ENCODE measurements at regions of chr17 and their contacts with region 1.

Region 1: DNA sequence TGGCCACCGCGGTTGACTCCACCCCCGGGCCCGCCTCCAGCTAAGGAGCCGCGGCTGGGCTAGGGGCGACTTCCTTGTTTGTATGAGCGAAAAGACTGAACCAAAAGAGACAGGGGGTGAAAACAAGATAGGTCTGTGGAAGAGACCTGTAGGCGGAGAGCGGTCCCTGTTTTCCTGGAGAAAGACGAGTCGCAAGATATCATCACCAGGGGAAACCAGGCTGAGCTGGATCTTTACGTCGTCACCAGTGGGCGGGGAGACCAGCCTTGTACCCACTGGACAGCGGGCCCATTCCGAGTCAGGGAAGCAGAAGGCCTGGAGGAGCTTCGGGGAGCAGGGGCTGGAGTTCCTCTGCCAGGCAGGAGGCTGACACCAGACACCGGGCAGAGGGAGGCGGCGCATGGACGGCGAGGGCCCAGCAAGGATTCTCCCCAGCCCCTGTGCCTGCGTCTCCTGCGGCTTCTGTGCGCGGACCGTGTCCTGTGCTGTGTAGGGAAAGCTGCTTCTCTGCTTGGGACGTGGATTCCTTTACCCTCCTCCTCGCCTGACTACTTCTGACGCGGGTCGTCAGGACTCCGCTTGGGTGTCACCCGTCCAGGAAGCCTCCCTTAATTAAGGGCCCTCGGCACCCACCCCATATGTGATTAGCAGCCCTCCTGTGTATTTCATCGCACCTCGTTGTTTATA is 10.3 kb upstream of the ARL4D start:
- DNase-seq: peak; percentile 93
- H3K4me3 Mint-ChIP-seq: peak overlapping the region; percentile 85
- H3K27ac Mint-ChIP-seq: peak overlapping the region; percentile 98
- H3K4me1 Mint-ChIP-seq: peaks cover 18% of the 10 kb centered on the region
- H3K27me3 Mint-ChIP-seq: no peaks in the 10 kb centered on the region

Region 2: DNA sequence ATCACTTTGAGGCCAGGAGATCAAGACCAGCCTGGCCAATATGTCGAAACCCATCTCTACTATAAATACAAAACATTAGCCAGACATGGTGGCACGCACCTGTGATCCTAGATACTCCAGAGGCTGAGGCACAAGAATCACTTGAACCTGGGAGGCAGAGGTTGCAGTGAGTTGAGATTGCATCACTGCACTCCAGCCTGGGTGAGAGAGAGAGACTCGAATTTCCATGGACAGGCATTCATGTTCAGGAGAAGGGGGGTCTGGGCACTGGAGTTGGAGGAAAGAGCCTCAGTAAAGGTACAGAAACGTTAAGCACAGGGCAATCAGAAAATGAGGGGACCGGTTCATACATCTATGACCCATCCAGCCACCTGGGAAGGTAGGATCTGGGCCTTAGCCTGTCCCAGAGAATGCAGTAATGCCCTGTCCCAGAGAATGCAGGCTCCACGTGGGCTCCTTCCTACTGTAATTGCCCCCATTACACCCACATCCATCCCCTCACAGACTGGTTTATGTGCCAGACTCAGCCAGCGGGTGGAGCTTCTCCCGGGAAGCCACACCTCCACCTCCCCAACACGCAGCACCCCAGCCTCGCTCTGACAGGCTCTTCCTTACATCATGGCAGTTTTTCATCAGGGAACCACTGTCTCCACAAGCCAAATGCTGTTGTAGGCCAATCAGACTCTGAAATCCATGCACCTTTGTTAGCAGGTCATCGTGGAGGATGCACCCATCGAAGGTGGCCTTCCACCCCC is 11.3 kb before region 1 on chr17:
- CTCF ChIA-PET with region 1: interaction called, 5 read pairs
- POLR2A ChIA-PET with region 1: interaction called, 15 read pairs
- DNase-seq: no peak
- H3K4me3 Mint-ChIP-seq: no peak overlapping the region
- H3K27ac Mint-ChIP-seq: no peak overlapping the region
- H3K4me1 Mint-ChIP-seq: peaks cover 14% of the 10 kb centered on the region
- H3K27me3 Mint-ChIP-seq: no peaks in the 10 kb centered on the region